ENCODE measurements at regions of chr11 and their contacts with region 1.

Region 1: DNA sequence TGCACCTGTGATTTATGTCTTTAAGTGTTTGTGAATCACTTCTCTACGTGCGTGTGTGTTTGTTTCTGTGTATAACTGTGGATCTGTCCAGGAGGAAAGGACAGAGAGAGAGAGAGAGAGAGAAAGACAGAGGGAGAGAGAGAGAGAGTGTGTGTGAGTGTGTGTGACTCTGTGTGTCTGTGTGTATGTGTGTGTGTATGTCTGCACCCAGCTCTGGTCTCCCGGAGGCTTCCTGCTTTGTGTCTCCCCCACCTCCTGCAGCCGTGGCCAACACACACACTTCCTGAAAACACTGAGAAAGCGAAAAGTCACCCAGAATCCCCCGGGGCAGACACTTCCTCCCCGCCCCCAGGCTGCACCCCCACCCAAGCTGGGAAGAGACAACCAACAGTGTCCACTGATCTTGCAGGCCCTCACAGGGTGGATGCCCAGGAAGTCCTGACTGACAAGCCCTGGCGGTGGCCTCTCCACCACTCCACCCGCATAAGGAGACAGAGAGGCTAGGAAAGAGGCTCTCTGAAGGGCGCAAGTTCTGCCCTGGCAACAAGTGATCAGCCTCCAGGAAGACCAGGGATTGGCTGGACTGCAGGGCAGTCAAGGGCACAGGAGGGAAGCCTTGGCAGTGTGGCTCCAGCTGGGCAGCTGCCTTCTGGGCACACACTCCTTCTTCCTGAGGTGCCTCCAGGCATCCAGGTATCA is 30.0 kb downstream of the ARAP1 start:
- DNase-seq: peak; percentile 89
- ATAC-seq: peak; percentile 91
- H3K4me3 Mint-ChIP-seq: peak overlapping the region; percentile 92
- H3K27ac Mint-ChIP-seq: peak overlapping the region; percentile 96
- H3K4me1 Mint-ChIP-seq: peaks cover 48% of the 10 kb centered on the region
- H3K27me3 Mint-ChIP-seq: no peaks in the 10 kb centered on the region

Region 2: DNA sequence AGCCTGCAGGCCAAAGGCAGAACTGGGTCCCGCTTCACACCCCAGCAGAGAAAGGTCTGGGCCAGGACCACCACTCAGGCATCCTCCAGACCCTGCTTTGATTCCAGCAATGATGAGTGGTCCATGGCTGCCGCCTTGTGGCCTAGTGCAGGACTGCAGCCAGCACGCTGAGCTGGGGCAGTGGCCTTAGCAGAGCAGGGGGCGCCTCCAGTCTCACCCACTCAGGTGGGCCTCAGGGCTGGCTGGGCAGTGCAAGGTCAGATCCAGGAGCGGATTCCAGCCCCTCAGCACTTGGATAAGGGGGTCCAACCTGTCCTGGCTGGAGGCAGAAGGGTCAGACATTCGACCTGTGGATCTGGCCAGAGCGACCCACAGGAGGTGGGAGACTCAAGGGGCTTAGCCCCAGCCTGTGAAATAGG is 38.4 kb before region 1 on chr11:
- CTCF ChIA-PET with region 1: interaction called, 11 read pairs
- POLR2A ChIA-PET with region 1: no interaction called
- intact Hi-C with region 1: no loop called
- DNase-seq: peak; percentile 83
- ATAC-seq: peak; percentile 60
- H3K4me3 Mint-ChIP-seq: no peak overlapping the region
- H3K27ac Mint-ChIP-seq: no peak overlapping the region
- H3K4me1 Mint-ChIP-seq: peaks cover 15% of the 10 kb centered on the region
- H3K27me3 Mint-ChIP-seq: no peaks in the 10 kb centered on the region

Region 3: GRCh38 chr11:72752088-72752914 is 30.1 kb after region 1 on chr11 and contains the start of gene ARAP1:
- CTCF ChIA-PET with region 1: interaction called, 5 read pairs
- POLR2A ChIA-PET with region 1: interaction called, 3 read pairs
- intact Hi-C with region 1: loop called (anchors 1 kb)
- DNase-seq: peak; percentile 86
- ATAC-seq: peak; percentile 83
- H3K4me3 Mint-ChIP-seq: peak within 1 kb of the TSS; percentile 95
- H3K27ac Mint-ChIP-seq: peak within 1 kb of the TSS; percentile 92
- H3K4me1 Mint-ChIP-seq: peaks cover 39% of the 10 kb centered on the region
- H3K27me3 Mint-ChIP-seq: no peaks in the 10 kb centered on the region
- total RNA-seq, gene ARAP1: 69.9 to 76.6 TPM

Region 4: DNA sequence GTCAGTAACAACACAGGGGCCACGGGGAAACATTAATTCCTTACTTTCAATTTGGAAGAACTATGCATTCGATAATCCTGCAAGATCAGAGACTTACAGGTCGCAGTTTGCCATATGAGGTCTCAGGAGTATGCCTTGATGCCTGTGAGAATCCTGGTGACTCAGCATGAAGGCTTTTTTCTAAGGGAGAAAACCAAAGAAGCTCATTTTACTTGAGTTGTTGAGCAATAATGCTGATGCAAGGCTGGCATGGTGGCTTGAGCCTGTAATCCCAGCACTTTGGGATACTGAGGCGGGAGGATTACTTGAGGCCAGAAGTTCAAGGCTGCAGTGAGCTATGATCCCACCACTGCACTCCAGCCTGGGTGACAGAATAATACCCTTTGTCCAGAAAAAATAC is 118.6 kb after region 1 on chr11:
- CTCF ChIA-PET with region 1: interaction called, 10 read pairs
- POLR2A ChIA-PET with region 1: no interaction called
- intact Hi-C with region 1: no loop called
- DNase-seq: no peak
- ATAC-seq: no peak
- H3K4me3 Mint-ChIP-seq: no peak overlapping the region
- H3K27ac Mint-ChIP-seq: no peak overlapping the region
- H3K4me1 Mint-ChIP-seq: no peaks in the 10 kb centered on the region
- H3K27me3 Mint-ChIP-seq: no peaks in the 10 kb centered on the region

Region 5: DNA sequence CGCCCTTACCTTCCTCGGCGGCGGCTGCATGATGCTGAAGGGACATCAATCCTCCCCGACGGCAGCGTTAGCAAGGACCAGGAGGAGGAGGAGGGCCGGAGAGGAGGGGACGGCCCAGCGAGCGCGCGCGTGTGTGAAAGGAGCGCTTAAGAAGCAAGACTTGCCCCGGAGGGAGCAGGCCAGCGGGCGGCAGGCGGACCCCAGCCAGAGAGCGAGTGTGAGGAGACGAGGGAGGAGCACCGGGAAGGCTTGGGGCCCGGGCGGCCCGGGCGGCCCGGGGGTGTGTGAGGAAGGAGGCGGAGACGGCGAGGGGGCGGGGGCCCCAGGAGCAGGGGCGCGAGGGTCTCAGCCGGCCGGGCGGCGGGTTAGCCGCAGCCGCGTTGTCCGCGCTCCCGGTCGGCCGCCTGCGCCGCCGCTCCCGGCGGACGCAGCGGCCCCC is 419.7 kb after region 1 on chr11:
- CTCF ChIA-PET with region 1: no interaction called
- POLR2A ChIA-PET with region 1: interaction called, 5 read pairs
- intact Hi-C with region 1: loop called (anchors 10 kb)
- DNase-seq: peak; percentile 73
- ATAC-seq: peak; percentile 17
- H3K4me3 Mint-ChIP-seq: peak overlapping the region; percentile 92
- H3K27ac Mint-ChIP-seq: peak overlapping the region; percentile 82
- H3K4me1 Mint-ChIP-seq: peaks cover 40% of the 10 kb centered on the region
- H3K27me3 Mint-ChIP-seq: no peaks in the 10 kb centered on the region

Region 6: GRCh38 chr11:73242251-73243079 is 520.3 kb after region 1 on chr11:
- CTCF ChIA-PET with region 1: interaction called, 5 read pairs
- POLR2A ChIA-PET with region 1: no interaction called
- intact Hi-C with region 1: loop called (anchors 2 to 10 kb)
- DNase-seq: peak; percentile 87
- ATAC-seq: peak; percentile 93
- H3K4me3 Mint-ChIP-seq: no peak overlapping the region
- H3K27ac Mint-ChIP-seq: no peak overlapping the region
- H3K4me1 Mint-ChIP-seq: peaks cover 2% of the 10 kb centered on the region
- H3K27me3 Mint-ChIP-seq: no peaks in the 10 kb centered on the region

Measured in activated CD4-positive, alpha-beta T cell treated with anti-CD3 and anti-CD28 coated beads for 36 hours (primary cell).